ENCODE measurements at regions of chr10 and their contacts with region 1.

Region 1: DNA sequence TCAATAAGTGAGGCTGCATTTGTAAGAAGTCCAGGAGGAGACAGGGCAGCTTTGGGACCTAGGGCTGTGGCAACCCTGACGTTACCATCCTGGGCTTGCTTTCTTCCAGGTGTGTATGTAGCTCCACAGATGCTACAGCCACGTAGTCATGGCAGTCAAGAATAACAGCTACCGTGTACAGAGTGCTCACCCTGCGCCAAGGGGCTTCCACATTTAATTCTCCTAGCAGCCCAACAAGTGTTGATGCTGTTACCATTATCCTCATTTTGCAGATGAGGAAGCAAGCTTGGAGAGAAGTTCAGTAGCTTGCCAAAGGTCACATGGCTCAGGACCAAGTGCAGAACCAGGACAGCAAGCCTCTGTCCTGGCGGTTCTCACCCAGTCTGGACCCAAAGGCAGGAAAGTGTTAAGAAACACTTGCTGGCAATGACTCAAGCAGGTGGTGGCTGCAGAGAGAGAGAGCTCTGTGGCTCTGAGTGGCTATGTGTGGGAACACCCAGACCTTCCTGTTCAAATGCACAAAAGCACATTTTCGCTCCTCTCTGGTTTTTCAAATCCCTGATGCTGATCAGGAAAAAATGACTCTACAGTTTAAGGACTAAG is 89.8 kb downstream of the CREM start:
- DNase-seq: peak; percentile 39 to 74
- H3K4me3 ChIP-seq: no peak overlapping the region
- H3K27ac ChIP-seq: no peak overlapping the region
- H3K4me1 ChIP-seq: peaks cover 0 to 9% (median 0%) of the 10 kb centered on the region in 4 donors
- H3K27me3 ChIP-seq: no peaks in the 10 kb centered on the region
- CTCF ChIP-seq: no peak

Region 2: DNA sequence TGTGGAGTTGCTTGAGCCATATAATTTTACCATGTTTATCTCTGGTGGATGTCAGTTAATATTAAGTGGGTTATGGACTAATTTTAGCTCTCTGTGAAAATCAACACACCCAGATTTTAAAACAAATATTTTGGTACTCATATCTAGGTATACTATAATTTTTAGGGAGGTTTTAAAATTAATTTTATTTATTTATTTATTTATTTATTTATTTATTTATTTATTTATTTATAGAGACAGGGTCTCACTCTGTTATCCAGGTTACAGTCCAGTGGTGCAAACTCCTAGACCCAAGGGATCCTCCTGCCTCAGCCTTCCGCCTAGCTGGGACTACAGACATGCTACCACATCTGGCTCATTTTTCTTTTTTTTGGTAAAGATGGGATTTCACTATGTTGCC is 97.0 kb before region 1 on chr10:
- intact Hi-C with region 1: loop called (anchors 2 kb)
- DNase-seq: no peak
- H3K4me3 ChIP-seq: no peak overlapping the region
- H3K27ac ChIP-seq: no peak overlapping the region
- H3K4me1 ChIP-seq: no peaks in the 10 kb centered on the region
- H3K27me3 ChIP-seq: no peaks in the 10 kb centered on the region
- CTCF ChIP-seq: no peak

Region 3: GRCh38 chr10:35546824-35547273 is 330.4 kb after region 1 on chr10:
- intact Hi-C with region 1: no loop called
- DNase-seq: no peak
- H3K4me3 ChIP-seq: no peak overlapping the region
- H3K27ac ChIP-seq: no peak overlapping the region
- H3K4me1 ChIP-seq: peaks cover 0 to 19% (median 7%) of the 10 kb centered on the region in 4 donors
- H3K27me3 ChIP-seq: no peaks in the 10 kb centered on the region
- CTCF ChIP-seq: no peak